HepG2 (cell line): ENCODE measurements at regions of chr17 and their contacts with region 1.

Region 1: DNA sequence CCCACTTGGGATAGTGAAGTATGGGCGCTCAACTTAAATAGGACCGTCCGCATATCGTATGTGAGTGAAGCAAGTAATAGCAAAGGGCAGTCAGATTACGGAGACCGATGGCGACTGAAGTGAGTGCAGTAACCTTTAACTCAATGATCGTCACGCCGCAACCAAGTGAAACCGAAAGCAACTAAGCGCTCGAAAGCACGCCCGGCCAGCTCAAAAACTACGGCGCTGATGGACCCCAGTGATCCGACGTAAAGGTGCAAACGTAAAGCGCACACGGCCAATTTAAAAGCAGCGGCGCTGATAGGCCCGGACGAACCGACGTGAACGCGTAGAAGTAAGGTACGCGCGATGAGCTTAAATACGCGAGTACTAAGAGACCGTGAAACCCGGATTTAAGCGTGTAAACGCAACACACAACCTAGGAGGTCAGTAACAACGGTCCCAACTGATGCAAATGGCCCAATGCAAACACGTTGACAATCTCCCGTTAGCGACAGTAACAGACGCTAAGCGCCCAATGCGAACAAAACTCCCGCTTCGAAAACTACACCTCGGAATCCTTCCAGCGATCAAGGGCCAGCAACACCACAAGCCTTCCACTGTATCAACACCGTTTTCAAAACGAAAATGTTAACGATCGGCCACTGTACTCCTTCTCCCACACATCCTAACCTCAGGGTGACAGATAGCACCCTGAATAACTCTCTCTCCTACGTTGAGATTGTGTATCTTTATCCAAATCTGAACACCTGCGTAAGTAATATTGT is 37.9 kb upstream of the ARL4D start:
- DNase-seq: peak; percentile 99
- ATAC-seq: peak; percentile 92
- H3K4me3 ChIP-seq: peak overlapping the region; percentile 63 to 71 (median 67)
- H3K27ac ChIP-seq: peak overlapping the region; percentile 98
- H3K4me1 ChIP-seq: peaks cover 28% of the 10 kb centered on the region
- H3K27me3 ChIP-seq: no peaks in the 10 kb centered on the region; a peak in 1 of 5 replicates
- CTCF ChIP-seq: no peak
- EP300 ChIP-seq: peak; percentile 69 to 70
- POLR2A ChIP-seq: peak; percentile 100
- RAD21 ChIP-seq: peak; percentile 99

Region 2: DNA sequence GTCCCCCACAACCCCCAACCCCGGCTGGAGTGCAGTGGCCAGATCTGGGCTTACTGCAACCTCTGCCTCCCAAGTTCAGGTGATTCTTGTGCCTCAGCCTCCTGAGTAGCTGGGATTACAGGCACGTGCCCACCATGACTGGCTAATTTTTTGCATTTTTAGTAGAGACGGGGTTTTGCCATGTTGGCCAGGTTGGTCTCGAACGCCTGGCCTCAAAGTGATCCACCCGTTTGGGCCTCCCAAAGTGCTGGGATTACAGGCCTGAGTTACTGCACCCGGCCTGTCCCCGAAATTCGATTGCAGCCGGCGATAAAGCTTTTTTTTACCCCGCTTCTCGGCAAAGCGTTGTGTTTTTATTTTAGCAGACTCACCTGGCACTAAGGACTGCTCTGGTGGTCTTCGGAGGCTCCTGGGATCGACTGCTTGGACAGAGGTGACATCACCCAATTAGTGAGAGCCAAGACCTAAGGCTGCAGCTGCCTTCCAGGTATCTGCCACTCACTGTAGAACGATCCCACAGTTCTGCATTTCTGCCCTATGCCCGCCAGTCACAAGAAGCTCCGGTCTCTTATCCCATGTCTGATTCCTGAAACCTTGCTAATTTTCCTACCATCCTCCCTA is 44.3 kb before region 1 on chr17:
- CTCF ChIA-PET with region 1: no interaction called
- POLR2A ChIA-PET with region 1: interaction called, 30 read pairs
- in situ Hi-C with region 1: no loop called
- intact Hi-C with region 1: no loop called
- DNase-seq: no peak
- ATAC-seq: no peak
- H3K4me3 ChIP-seq: no peak overlapping the region; a peak in 1 of 6 replicates
- H3K27ac ChIP-seq: no peak overlapping the region
- H3K4me1 ChIP-seq: peaks cover 20% of the 10 kb centered on the region
- H3K27me3 ChIP-seq: 0 out of 5 replicates have a peak, but pooled peaks cover 0 to 2% of the 10 kb centered on the region in 2 experiments
- CTCF ChIP-seq: no peak
- EP300 ChIP-seq: no peak
- POLR2A ChIP-seq: no peak
- RAD21 ChIP-seq: no peak

Region 3: GRCh38 chr17:43388359-43389045 is 27.6 kb after region 1 on chr17:
- CTCF ChIA-PET with region 1: no interaction called
- POLR2A ChIA-PET with region 1: interaction called, 185 read pairs
- in situ Hi-C with region 1: no loop called
- intact Hi-C with region 1: no loop called
- DNase-seq: peak; percentile 81
- ATAC-seq: peak; percentile 71
- H3K4me3 ChIP-seq: peak overlapping the region; percentile 63 to 78 (median 70)
- H3K27ac ChIP-seq: peak overlapping the region; percentile 86
- H3K4me1 ChIP-seq: peaks cover 81% of the 10 kb centered on the region
- H3K27me3 ChIP-seq: no peaks in the 10 kb centered on the region
- CTCF ChIP-seq: peak; percentile 19; the same call in 1 of the 2 replicates
- EP300 ChIP-seq: no peak
- POLR2A ChIP-seq: peak; percentile 85 to 96
- RAD21 ChIP-seq: 0 out of 2 replicates have a peak, but pooled peaks have one; percentile 21

Region 4: GRCh38 chr17:43456661-43457361 is 95.9 kb after region 1 on chr17:
- CTCF ChIA-PET with region 1: no interaction called
- POLR2A ChIA-PET with region 1: interaction called, 30 read pairs
- in situ Hi-C with region 1: no loop called
- intact Hi-C with region 1: no loop called
- DNase-seq: peak; percentile 100
- ATAC-seq: peak; percentile 95
- H3K4me3 ChIP-seq: peak overlapping the region in 1 of 3 experiments; percentile 17; a peak in 1 of 6 replicates
- H3K27ac ChIP-seq: peak overlapping the region; percentile 83
- H3K4me1 ChIP-seq: peaks cover 79% of the 10 kb centered on the region
- H3K27me3 ChIP-seq: no peaks in the 10 kb centered on the region
- CTCF ChIP-seq: peak; percentile 37
- EP300 ChIP-seq: peak; percentile 79 to 99; a peak in 3 of 4 replicates
- POLR2A ChIP-seq: peak; percentile 60 to 68
- RAD21 ChIP-seq: peak; percentile 57; the same call in 1 of the 2 replicates

Region 5: GRCh38 chr17:43483674-43484372 is 122.9 kb after region 1 on chr17 and contains the start of gene DHX8:
- CTCF ChIA-PET with region 1: no interaction called
- POLR2A ChIA-PET with region 1: interaction called, 288 read pairs
- in situ Hi-C with region 1: no loop called
- intact Hi-C with region 1: no loop called
- DNase-seq: peak; percentile 100
- ATAC-seq: peak; percentile 94
- H3K4me3 ChIP-seq: peak within 1 kb of the TSS; percentile 76 to 85 (median 78)
- H3K27ac ChIP-seq: peak within 1 kb of the TSS; percentile 73
- H3K4me1 ChIP-seq: peaks cover 75% of the 10 kb centered on the region
- H3K27me3 ChIP-seq: no peaks in the 10 kb centered on the region; a peak in 1 of 5 replicates
- CTCF ChIP-seq: peak; percentile 100
- EP300 ChIP-seq: peak; percentile 51 to 66
- POLR2A ChIP-seq: peak; percentile 83 to 92
- RAD21 ChIP-seq: peak; percentile 100
- total RNA-seq, gene DHX8: 48.9 and 66.9 TPM in 2 replicates

Region 6: GRCh38 chr17:43658900-43659299 is 298.0 kb after region 1 on chr17:
- CTCF ChIA-PET with region 1: no interaction called
- POLR2A ChIA-PET with region 1: no interaction called
- in situ Hi-C with region 1: no loop called
- intact Hi-C with region 1: no loop called
- DNase-seq: no peak
- ATAC-seq: peak; percentile 20; the same call in 1 of the 3 replicates
- H3K4me3 ChIP-seq: no peak overlapping the region; a peak in 1 of 6 replicates
- H3K27ac ChIP-seq: no peak overlapping the region
- H3K4me1 ChIP-seq: peaks cover 16% of the 10 kb centered on the region
- H3K27me3 ChIP-seq: peaks cover 13 to 43% of the 10 kb centered on the region in 2 experiments; a peak in 4 of 5 replicates
- CTCF ChIP-seq: no peak
- EP300 ChIP-seq: no peak
- POLR2A ChIP-seq: no peak
- RAD21 ChIP-seq: no peak